MCF 10A (cell line): ENCODE measurements at regions of chr10 and their contacts with region 1.

Region 1: DNA sequence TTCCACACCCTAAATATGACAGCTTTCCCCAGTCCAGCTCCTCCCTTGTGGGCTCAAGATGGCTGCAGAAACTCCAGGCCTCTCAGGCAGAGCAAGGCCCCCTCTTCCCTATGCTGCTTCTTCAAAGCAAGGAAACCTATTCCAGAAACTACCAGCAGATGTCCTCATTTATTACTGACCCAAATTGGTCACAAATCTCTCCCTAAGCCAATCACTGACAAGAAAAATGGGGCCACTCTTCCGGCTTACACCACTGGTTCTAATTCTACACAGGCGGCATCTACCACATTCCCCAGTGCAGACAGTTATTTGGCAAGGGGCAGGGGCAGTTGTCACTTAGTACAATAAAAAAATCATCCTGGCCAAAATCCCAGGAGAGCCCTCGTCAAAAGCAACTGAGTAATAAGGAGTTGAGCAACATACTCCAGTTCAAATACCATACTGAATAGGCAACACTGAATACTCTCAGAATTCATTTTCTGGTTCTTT is 150.4 kb downstream of the SFMBT2 start:
- DNase-seq: peak; percentile 97
- H3K4me3 Mint-ChIP-seq: peak overlapping the region; percentile 29
- H3K27ac Mint-ChIP-seq: peak overlapping the region; percentile 47
- H3K4me1 Mint-ChIP-seq: peaks cover 46% of the 10 kb centered on the region
- H3K27me3 Mint-ChIP-seq: no peaks in the 10 kb centered on the region
- CTCF ChIP-seq: peak; percentile 52

Region 2: GRCh38 chr10:7233259-7234009 is 27.0 kb before region 1 on chr10:
- CTCF ChIA-PET with region 1: interaction called, 8 read pairs
- POLR2A ChIA-PET with region 1: interaction called, 11 read pairs
- intact Hi-C with region 1: no loop called
- DNase-seq: peak; percentile 84
- H3K4me3 Mint-ChIP-seq: peak overlapping the region; percentile 26
- H3K27ac Mint-ChIP-seq: peak overlapping the region; percentile 14
- H3K4me1 Mint-ChIP-seq: peaks cover 28% of the 10 kb centered on the region
- H3K27me3 Mint-ChIP-seq: no peaks in the 10 kb centered on the region
- CTCF ChIP-seq: no peak

Region 3: DNA sequence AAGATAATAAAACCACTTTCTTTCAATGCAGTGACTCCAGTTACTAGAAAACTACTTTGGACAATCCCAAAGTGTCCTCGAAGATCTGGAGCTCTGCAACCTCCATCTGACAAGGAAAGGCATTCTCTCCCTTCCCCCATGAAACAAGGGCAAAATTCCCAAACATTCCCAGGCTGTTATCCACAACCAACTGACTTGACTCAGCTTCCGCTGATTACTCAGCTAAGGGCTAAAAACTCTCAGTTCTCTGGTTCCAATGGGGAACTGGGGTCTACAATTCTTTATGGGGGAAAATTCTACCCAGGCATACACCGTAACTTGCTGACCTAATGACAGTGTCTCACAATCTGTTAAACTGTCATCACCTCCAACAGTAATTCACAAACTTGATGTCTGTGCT is 102.0 kb after region 1 on chr10:
- CTCF ChIA-PET with region 1: no interaction called
- POLR2A ChIA-PET with region 1: no interaction called
- intact Hi-C with region 1: no loop called
- DNase-seq: no peak
- H3K4me3 Mint-ChIP-seq: no peak overlapping the region
- H3K27ac Mint-ChIP-seq: no peak overlapping the region
- H3K4me1 Mint-ChIP-seq: peaks cover 19% of the 10 kb centered on the region
- H3K27me3 Mint-ChIP-seq: no peaks in the 10 kb centered on the region
- CTCF ChIP-seq: no peak